ENCODE measurements at regions of chr18 and their contacts with region 1.

Region 1: GRCh38 chr18:13375302-13376255 is 157.0 kb downstream of the LDLRAD4 start:
- DNase-seq: peak in 8 of 9 experiments; percentile 54 to 82 (median 68)
- ATAC-seq: peak; percentile 69
- H3K4me3 ChIP-seq: peak overlapping the region in 1 of 2 experiments; percentile 2
- H3K4me3 Mint-ChIP-seq: peak overlapping the region; percentile 64
- H3K27ac ChIP-seq: peak overlapping the region in 1 of 2 experiments; percentile 14
- H3K27ac Mint-ChIP-seq: peak overlapping the region; percentile 91
- H3K4me1 ChIP-seq: peaks cover 76% of the 10 kb centered on the region
- H3K4me1 Mint-ChIP-seq: peaks cover 71% of the 10 kb centered on the region
- H3K27me3 ChIP-seq: no peaks in the 10 kb centered on the region
- H3K27me3 Mint-ChIP-seq: no peaks in the 10 kb centered on the region
- CTCF ChIP-seq: no peak

Region 2: DNA sequence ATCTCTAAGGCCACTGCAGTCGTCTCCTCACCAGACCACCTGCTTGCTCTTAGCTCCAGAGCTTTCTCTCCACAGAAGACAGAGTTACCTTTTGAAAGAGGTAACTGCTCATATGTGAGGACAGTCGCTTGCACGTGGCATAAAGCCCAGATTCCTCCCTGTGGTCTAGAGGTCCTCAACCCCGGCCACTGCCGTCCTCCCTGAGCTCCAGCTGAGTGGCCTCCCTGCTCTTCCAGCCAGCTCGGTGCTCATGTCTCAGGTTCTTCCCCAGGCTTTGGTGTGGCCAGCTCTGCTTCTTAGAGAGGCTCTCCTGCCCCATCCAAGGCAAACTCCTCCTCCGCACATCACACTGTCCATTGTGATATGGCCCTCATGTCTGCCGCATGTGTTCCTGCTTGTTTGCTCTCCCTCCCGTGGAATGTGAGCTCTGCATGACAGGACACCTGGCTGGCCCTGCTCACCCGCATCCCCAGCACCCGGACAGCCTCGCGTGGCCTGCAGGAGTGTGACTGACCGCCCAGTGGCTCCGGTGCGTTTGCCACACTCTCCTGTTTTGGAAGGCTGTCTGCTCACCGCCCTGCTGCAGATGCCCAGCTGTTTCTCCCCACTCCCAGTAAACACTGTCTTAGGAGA is 248.5 kb before region 1 on chr18:
- CTCF ChIA-PET with region 1: no interaction called
- POLR2A ChIA-PET with region 1: no interaction called
- intact Hi-C with region 1: no loop called
- DNase-seq: no peak
- ATAC-seq: no peak
- H3K4me3 ChIP-seq: no peak overlapping the region
- H3K4me3 Mint-ChIP-seq: no peak overlapping the region
- H3K27ac ChIP-seq: no peak overlapping the region
- H3K27ac Mint-ChIP-seq: peak overlapping the region; percentile 34
- H3K4me1 ChIP-seq: no peaks in the 10 kb centered on the region
- H3K4me1 Mint-ChIP-seq: peaks cover 7% of the 10 kb centered on the region
- H3K27me3 ChIP-seq: no peaks in the 10 kb centered on the region
- H3K27me3 Mint-ChIP-seq: no peaks in the 10 kb centered on the region
- CTCF ChIP-seq: no peak

Region 3: GRCh38 chr18:13268158-13269012 is 107.2 kb before region 1 on chr18:
- CTCF ChIA-PET with region 1: no interaction called
- POLR2A ChIA-PET with region 1: no interaction called
- intact Hi-C with region 1: loop called in 1 of 2 experiments (anchors 5 kb)
- DNase-seq: peak in 1 of 9 experiments; percentile 32
- ATAC-seq: no peak
- H3K4me3 ChIP-seq: no peak overlapping the region
- H3K4me3 Mint-ChIP-seq: no peak overlapping the region
- H3K27ac ChIP-seq: no peak overlapping the region
- H3K27ac Mint-ChIP-seq: peak overlapping the region; percentile 64
- H3K4me1 ChIP-seq: peaks cover 43% of the 10 kb centered on the region
- H3K4me1 Mint-ChIP-seq: peaks cover 65% of the 10 kb centered on the region
- H3K27me3 ChIP-seq: no peaks in the 10 kb centered on the region
- H3K27me3 Mint-ChIP-seq: no peaks in the 10 kb centered on the region
- CTCF ChIP-seq: no peak

Region 4: GRCh38 chr18:13313006-13313686 is 62.4 kb before region 1 on chr18:
- CTCF ChIA-PET with region 1: no interaction called
- POLR2A ChIA-PET with region 1: no interaction called
- intact Hi-C with region 1: loop called in 1 of 2 experiments (anchors 5 kb)
- DNase-seq: peak in 7 of 9 experiments; percentile 26 to 75 (median 53)
- ATAC-seq: peak; percentile 77
- H3K4me3 ChIP-seq: no peak overlapping the region
- H3K4me3 Mint-ChIP-seq: peak overlapping the region; percentile 38
- H3K27ac ChIP-seq: peak overlapping the region; percentile 10 to 15
- H3K27ac Mint-ChIP-seq: peak overlapping the region; percentile 90
- H3K4me1 ChIP-seq: peaks cover 34% of the 10 kb centered on the region
- H3K4me1 Mint-ChIP-seq: peaks cover 48% of the 10 kb centered on the region
- H3K27me3 ChIP-seq: peaks cover 0 to 2% of the 10 kb centered on the region in 2 experiments
- H3K27me3 Mint-ChIP-seq: no peaks in the 10 kb centered on the region
- CTCF ChIP-seq: no peak

Region 5: GRCh38 chr18:13447626-13448334 is 72.2 kb after region 1 on chr18:
- CTCF ChIA-PET with region 1: no interaction called
- POLR2A ChIA-PET with region 1: no interaction called
- intact Hi-C with region 1: no loop called
- DNase-seq: no peak
- ATAC-seq: no peak
- H3K4me3 ChIP-seq: no peak overlapping the region
- H3K4me3 Mint-ChIP-seq: no peak overlapping the region
- H3K27ac ChIP-seq: no peak overlapping the region
- H3K27ac Mint-ChIP-seq: no peak overlapping the region
- H3K4me1 ChIP-seq: peaks cover 16% of the 10 kb centered on the region
- H3K4me1 Mint-ChIP-seq: peaks cover 27% of the 10 kb centered on the region
- H3K27me3 ChIP-seq: no peaks in the 10 kb centered on the region
- H3K27me3 Mint-ChIP-seq: no peaks in the 10 kb centered on the region
- CTCF ChIP-seq: no peak

Region 6: GRCh38 chr18:13464432-13465123 is 89.0 kb after region 1 on chr18:
- CTCF ChIA-PET with region 1: no interaction called
- POLR2A ChIA-PET with region 1: no interaction called
- intact Hi-C with region 1: loop called in 1 of 2 experiments (anchors 5 kb)
- DNase-seq: peak; percentile 33 to 86 (median 76)
- ATAC-seq: peak; percentile 92
- H3K4me3 ChIP-seq: peak overlapping the region; percentile 60 to 73
- H3K4me3 Mint-ChIP-seq: peak overlapping the region; percentile 91
- H3K27ac ChIP-seq: peak overlapping the region; percentile 66 to 78
- H3K27ac Mint-ChIP-seq: peak overlapping the region; percentile 97
- H3K4me1 ChIP-seq: peaks cover 44% of the 10 kb centered on the region
- H3K4me1 Mint-ChIP-seq: peaks cover 71% of the 10 kb centered on the region
- H3K27me3 ChIP-seq: no peaks in the 10 kb centered on the region
- H3K27me3 Mint-ChIP-seq: no peaks in the 10 kb centered on the region
- CTCF ChIP-seq: no peak

Measured in CD8-positive, alpha-beta T cell (primary cell).